Cardiac septum (tissue), 1 donor: ENCODE measurements at regions of chr5 and their contacts with region 1.

Region 1: GRCh38 chr5:57499262-57500050 is 16.8 kb upstream of the ACTBL2 start:
- DNase-seq: no peak

Region 2: GRCh38 chr5:57137401-57137800 is 362.1 kb before region 1 on chr5:
- intact Hi-C with region 1: no loop called
- DNase-seq: no peak

Region 3: GRCh38 chr5:57298295-57298984 is 201.0 kb before region 1 on chr5:
- intact Hi-C with region 1: loop called (anchors 5 kb)
- DNase-seq: peak; percentile 82

Region 4: GRCh38 chr5:57456531-57457135 is 42.8 kb before region 1 on chr5:
- intact Hi-C with region 1: no loop called
- DNase-seq: no peak

Region 5: DNA sequence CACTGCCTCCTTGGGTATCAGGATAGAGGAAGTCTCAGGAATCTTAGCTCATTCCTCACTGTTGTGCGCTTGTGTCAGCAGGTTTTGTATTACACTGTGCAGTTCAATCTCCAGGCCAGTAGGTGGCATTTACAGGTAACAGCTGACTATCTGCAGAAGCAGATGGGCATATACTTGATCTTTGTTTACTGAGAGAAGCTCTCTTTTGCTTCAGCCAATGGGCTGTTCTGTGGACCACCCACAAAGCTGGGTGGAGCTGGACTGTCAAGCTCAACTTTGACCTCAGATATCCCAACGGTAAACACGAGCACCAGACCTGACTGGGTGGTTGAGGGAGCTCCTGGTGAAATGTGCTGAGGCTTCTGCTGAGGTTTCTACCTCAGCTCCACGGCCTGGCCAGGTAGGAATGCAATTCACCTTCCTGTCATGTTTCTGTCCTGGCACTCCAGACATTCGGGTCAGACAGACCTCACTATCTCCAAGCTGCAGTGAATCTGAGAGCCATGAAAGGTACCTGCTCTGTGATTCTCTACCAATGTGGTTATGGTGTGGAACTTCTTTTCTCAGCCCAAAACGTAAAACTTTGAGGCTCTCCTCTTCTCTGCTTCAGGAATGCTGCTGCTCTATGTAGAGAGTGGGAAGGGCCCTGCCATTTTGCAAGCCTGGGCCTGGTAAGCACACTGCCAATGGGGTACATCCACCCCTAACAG is 151.1 kb after region 1 on chr5:
- intact Hi-C with region 1: loop called (anchors 5 kb)
- DNase-seq: no peak

Region 6: DNA sequence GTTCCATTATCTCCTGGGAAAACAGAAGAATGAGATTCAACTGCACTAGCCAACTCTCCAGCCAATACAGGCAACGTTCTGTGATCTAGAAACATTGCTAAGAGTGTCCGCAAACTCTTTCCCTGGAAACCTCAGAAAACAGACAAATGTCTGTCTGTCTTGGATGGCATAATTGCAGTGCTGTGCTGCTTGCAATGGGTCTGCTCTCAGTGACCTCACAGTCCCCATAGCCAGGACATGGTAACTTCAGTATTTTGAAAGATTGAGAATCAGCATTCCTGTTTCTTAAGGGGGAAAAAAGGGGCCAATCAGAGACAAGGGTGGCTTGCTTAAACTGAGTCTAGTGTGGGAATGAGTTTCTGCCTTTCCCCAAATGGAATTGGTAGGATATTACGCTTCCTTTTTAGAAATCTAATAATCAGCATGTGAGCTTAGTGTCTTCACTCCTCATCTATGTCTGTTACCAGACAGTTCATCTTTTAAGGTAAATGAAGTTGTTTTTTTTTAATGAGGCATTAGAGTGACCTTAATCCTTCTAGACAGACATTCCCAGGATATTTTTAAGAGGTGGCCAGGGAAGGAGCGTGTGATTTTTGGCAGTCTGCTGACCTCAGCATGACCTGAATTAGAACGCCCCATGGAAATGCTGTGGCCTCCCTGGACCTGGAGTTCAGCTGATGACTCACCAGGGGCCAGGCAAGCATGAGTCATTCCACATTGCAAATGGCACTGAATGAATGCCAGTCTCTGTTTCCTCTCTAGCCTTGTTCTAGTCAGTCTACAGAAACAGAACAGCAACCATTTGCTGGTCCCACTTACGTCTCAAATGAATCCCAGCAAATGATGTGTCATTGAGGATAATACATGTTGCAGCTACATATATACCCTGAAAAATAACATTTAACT is 193.4 kb after region 1 on chr5:
- intact Hi-C with region 1: loop called (anchors 5 kb)
- DNase-seq: peak; percentile 80

Region 7: GRCh38 chr5:57779383-57780223 is 280.1 kb after region 1 on chr5:
- intact Hi-C with region 1: loop called (anchors 5 kb)
- DNase-seq: no peak

Region 8: GRCh38 chr5:57887851-57888621 is 388.6 kb after region 1 on chr5:
- intact Hi-C with region 1: loop called (anchors 5 kb)
- DNase-seq: no peak

Region 9: GRCh38 chr5:58258984-58259684 is 759.7 kb after region 1 on chr5:
- intact Hi-C with region 1: no loop called
- DNase-seq: no peak